Aorta (tissue), 5 donors: ENCODE measurements at regions of chr3 and their contacts with region 1.

Region 1: DNA sequence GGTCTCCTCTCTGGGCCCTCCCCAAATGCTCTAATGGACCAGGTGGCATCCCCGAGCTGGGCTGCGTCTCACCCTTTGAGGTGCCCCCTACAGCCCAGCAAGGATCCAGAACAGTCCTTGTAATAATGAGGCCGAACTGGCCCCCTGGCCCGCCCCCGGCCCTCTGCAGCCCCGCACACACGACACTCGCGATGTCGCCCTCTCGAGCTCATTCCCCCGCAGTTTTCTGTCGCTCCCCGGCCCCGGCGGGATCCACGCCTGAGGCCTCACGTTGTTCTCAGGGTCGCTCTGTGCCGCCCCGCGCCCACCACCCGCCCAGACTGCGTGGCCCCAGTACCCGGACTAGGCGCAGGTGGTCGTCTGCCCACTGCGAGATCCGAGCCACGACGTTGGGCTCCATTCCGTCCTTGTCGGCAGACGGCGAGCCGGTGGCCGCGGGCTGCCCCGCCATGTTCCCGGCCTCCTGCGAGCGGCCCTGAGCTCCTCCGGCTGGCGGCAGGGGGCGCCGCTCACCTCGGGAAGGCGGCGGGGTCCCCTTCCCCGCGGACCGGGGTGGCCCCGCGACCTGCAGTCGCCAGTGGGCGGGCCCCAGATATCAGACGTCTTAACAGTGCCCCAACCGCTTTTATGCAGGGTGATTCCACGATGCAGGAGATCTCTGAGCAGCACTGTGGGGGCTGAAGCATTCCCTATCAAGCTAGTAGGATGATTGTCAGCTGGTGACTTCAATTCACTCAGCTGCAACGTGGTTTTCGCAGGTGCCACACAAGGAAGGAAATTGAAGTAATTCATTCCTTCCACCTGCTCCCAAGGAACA is at the start of gene C3orf33:
- DNase-seq: peak; percentile 73 to 90
- ATAC-seq: peak; percentile 96
- H3K4me3 ChIP-seq: peak within 1 kb of the TSS; percentile 44 to 75
- H3K27ac ChIP-seq: peak within 1 kb of the TSS in 1 of 2 donors; percentile 43
- H3K4me1 ChIP-seq: no peaks in the 10 kb centered on the region
- H3K27me3 ChIP-seq: no peaks in the 10 kb centered on the region
- total RNA-seq, gene C3orf33: 1.9 to 2.2 TPM

Region 2: GRCh38 chr3:155854141-155854940 is 48.3 kb after region 1 on chr3 and contains the start of gene SLC33A1:
- intact Hi-C with region 1: loop called in 1 of 2 experiments (anchors 10 kb)
- DNase-seq: peak; percentile 100
- ATAC-seq: peak; percentile 100
- H3K4me3 ChIP-seq: peak within 1 kb of the TSS; percentile 72 to 76
- H3K27ac ChIP-seq: peak within 1 kb of the TSS; percentile 52 to 87
- H3K4me1 ChIP-seq: peaks cover 0 to 18% of the 10 kb centered on the region in 2 donors
- H3K27me3 ChIP-seq: no peaks in the 10 kb centered on the region
- total RNA-seq, gene SLC33A1: 27.1 to 28.5 TPM